Calu3 (cell line): ENCODE measurements at regions of chr11 and their contacts with region 1.

Region 1: DNA sequence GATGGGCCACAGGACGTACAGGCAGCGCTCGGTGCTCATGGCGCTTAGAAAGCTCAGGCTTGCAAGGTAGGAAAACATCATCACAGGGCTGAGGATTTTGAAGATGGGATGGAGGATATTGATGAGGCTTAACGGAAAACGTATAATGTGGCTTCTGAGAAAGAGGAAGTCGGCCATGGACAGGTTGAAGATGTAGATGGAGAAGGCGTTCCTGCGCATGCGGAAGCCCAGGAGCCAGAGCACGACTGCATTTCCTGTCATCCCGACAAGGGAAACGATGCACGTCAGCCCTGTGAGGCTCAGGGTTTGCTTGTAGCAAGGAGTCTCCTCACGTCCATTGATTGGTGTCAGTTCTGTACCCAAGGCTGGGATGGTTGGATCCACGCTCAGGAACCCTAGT is 17.4 kb upstream of the MRGPRX1 start:
- DNase-seq: no peak
- H3K4me3 Mint-ChIP-seq: no peak overlapping the region
- H3K27ac Mint-ChIP-seq: no peak overlapping the region
- H3K4me1 Mint-ChIP-seq: peaks cover 15% of the 10 kb centered on the region
- H3K27me3 Mint-ChIP-seq: peaks cover 44% of the 10 kb centered on the region
- CTCF ChIP-seq: no peak

Region 2: GRCh38 chr11:18890615-18891014 is 66.0 kb before region 1 on chr11:
- CTCF ChIA-PET with region 1: no interaction called
- intact Hi-C with region 1: no loop called
- DNase-seq: no peak
- H3K4me3 Mint-ChIP-seq: no peak overlapping the region
- H3K27ac Mint-ChIP-seq: no peak overlapping the region
- H3K4me1 Mint-ChIP-seq: no peaks in the 10 kb centered on the region
- H3K27me3 Mint-ChIP-seq: peaks cover 92% of the 10 kb centered on the region
- CTCF ChIP-seq: no peak

Region 3: DNA sequence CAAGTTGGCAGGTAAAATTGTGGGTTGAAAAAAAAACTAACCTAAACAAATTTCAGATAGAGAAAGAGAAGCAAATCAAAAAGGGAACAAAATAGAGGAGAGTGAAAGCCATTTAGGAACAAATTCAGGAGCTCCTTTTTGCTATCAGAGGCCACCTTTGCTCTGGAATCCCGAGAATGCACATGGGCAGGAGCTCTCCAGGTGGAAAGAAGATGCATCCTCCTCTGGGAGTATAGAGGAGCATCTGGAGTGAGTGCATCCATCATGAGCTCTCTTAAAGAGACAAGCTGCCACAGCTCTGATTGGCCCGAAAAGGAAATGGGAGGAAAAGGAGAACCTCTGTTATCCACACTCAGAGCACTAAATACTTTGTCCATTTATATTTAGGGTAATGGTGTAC is 43.7 kb before region 1 on chr11:
- CTCF ChIA-PET with region 1: no interaction called
- intact Hi-C with region 1: no loop called
- DNase-seq: no peak
- H3K4me3 Mint-ChIP-seq: no peak overlapping the region
- H3K27ac Mint-ChIP-seq: no peak overlapping the region
- H3K4me1 Mint-ChIP-seq: no peaks in the 10 kb centered on the region
- H3K27me3 Mint-ChIP-seq: peaks cover 80% of the 10 kb centered on the region
- CTCF ChIP-seq: no peak

Region 4: GRCh38 chr11:18981897-18982296 is 25.3 kb after region 1 on chr11:
- CTCF ChIA-PET with region 1: no interaction called
- intact Hi-C with region 1: loop called (anchors 2 kb)
- DNase-seq: no peak
- H3K4me3 Mint-ChIP-seq: no peak overlapping the region
- H3K27ac Mint-ChIP-seq: no peak overlapping the region
- H3K4me1 Mint-ChIP-seq: no peaks in the 10 kb centered on the region
- H3K27me3 Mint-ChIP-seq: peaks cover 70% of the 10 kb centered on the region
- CTCF ChIP-seq: no peak